Right ventricle myocardium superior (tissue), 1 donor: ENCODE measurements at regions of chr13 and their contacts with region 1.

Region 1: DNA sequence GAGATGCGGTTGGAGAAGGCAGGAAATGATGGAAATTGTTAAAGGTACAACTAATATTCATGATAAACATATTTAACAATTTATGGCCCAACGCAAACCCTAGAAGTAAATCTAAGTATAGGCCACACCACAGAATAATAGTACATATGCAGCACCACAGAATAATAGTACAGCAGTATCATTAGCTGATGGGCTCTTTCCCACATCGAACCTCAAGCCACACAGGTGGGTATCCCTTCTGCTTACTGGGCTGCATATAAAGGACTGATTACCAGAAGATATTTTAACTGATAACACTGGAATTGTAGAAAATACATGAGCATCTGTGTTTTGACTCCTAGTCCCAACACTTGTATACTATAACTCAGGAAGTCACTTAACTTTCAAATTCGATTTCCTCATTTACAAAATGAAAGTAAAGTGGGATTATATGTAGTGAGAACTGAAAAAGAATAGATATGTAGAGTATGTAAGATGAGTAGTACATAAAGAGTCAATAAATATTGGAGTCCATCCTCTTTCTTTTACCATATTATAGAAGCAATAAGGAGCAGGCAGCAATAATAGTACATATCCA is 91.5 kb downstream of the TSC22D1 start:
- DNase-seq: no peak
- ATAC-seq: no peak

Region 2: DNA sequence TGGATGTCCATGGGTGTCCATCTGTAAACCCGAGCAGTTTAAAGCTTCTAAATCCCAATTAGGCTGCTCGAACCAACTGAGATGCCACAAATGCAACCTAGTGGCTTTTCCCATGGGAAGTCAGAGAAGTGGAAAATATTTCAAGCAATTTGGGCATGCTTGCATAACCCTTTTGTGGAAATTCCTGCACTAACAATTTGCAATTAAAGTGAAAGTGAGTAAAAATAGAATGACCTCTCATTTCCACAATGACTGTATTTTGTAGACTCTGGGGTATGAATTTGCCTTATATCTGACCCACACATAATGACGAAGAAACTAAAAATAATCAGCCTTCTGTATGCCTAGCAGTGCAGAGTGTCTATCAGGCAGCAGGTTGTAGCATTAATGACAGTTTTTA is 183.3 kb after region 1 on chr13:
- intact Hi-C with region 1: no loop called
- DNase-seq: no peak
- ATAC-seq: no peak

Region 3: GRCh38 chr13:44879463-44880058 is 394.9 kb after region 1 on chr13:
- intact Hi-C with region 1: loop called (anchors 5 kb)
- DNase-seq: no peak
- ATAC-seq: peak; percentile 34

Region 4: GRCh38 chr13:44969551-44970484 is 485.2 kb after region 1 on chr13:
- intact Hi-C with region 1: loop called (anchors 2 kb)
- DNase-seq: no peak
- ATAC-seq: peak; percentile 71